GM12878 (cell line): ENCODE measurements at regions of chr7 and their contacts with region 1.

Region 1: DNA sequence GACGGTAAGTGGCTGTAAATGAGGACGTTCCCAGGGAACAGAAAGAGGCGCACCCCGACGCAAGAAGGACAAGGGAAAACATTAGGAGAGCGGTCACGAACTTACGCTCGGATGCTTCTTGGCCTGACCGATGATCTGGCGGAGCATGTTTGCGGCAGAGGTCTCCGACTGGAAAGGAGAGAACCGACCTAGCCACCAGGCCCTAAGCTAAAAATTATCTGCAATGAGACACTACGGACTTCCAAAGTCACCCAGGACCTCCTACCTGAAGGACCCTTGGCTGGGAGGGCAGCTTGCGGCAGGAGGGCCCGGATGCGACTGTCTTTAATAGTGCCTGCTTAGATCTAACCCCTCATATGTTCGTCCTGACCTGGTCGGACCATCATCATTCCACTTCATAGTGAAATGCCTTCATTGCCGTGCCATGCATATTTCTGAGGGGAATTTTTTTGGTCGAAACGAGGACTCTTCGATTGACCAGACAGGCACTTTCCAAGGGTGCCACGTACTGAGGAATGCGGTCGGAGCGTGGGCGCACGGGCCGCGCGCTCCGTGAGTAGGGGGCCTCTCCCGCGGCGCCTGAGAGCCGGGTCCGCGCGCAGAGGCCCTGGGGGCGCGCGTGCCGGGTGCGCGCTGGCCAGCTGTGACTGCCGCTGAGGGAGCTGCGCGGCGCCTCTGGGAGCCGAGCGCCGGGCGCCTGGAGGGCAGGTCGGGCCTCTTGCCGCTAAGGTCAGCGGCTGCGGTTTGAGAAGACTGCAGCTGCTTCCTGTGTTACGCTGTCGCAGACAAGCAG is 33.6 kb upstream of the PHF14 start:
- DNase-seq: peak; percentile 88
- ATAC-seq: peak; percentile 94
- H3K4me3 ChIP-seq: peak overlapping the region; percentile 95
- H3K27ac ChIP-seq: peak overlapping the region; percentile 98
- H3K4me1 ChIP-seq: peaks cover 3% of the 10 kb centered on the region; the same call in 1 of the 2 replicates
- H3K27me3 ChIP-seq: no peaks in the 10 kb centered on the region
- CTCF ChIP-seq: no peak
- EP300 ChIP-seq: peak in 1 of 2 experiments; percentile 45; a peak in 2 of 4 replicates
- POLR2A ChIP-seq: peak; percentile 98
- RAD21 ChIP-seq: no peak; the same call in 1 of the 2 replicates

Region 2: DNA sequence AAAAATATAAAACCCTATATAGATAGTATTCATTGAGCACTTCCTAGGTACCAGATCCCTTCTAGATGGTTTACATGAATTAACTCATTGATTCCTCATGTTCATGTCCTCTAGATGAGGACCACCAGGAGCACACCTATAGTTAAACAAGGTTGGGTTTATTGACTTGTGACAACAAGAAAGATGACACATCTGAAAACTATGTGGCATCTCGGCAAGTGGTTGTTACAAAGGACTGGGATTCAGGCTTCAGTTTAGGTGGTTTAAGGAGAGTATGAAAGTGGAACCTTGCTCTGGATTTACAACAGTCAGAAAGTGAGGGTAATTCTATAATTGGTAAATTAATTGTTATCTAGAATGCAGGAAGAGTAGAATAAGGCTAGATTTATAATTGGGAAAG is 65.4 kb before region 1 on chr7:
- CTCF ChIA-PET with region 1: no interaction called
- POLR2A ChIA-PET with region 1: no interaction called
- RAD21 ChIA-PET with region 1: no interaction called
- SMC1A ChIA-PET with region 1: no interaction called
- in situ Hi-C with region 1: no loop called
- intact Hi-C with region 1: no loop called
- DNase-seq: no peak
- ATAC-seq: no peak
- H3K4me3 ChIP-seq: no peak overlapping the region
- H3K27ac ChIP-seq: no peak overlapping the region
- H3K4me1 ChIP-seq: no peaks in the 10 kb centered on the region
- H3K27me3 ChIP-seq: no peaks in the 10 kb centered on the region
- CTCF ChIP-seq: no peak
- EP300 ChIP-seq: no peak
- POLR2A ChIP-seq: no peak
- RAD21 ChIP-seq: no peak

Region 3: DNA sequence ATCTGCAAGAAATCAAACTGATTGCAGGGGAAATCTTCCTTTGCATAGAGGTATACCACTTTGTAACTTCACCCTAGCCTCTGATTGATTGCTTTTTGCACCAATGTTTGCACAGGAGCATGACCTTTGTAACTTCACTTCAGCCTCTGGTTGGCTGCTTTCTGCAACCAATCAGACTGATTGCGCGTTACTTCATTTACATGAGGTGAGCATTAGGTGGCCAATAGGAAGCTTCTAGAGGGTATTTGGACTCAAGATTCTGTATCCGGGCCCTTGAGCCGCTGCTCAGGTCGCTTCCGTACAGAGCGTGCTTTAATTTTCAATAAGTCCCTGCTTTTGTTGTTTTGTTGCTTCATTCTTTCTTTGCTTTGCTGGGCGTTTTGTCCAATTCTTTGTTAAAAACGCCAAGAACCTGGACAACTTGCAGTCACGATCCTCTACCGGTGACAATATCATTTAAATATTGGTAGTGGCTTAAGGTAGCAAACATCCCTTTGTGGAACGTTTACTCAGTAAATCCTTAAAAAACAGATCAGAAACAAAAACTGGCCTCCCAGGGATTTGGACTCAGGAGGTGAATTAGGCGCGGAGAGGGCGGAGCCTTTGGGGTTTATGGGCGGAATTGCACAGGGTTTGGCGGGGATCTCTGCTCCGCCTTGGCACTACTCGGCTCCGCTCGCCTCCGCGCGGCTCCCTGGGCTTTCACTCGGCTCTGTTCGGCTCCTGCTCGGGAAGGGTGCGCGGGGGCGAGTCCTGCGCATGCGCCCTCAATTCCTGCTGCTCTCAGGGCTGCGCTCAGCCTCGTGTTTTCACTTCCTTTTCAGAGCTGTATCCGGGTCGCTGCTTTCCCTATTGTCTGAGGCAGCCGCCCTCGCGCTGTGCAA is 33.2 kb after region 1 on chr7 and contains the start of gene PHF14:
- CTCF ChIA-PET with region 1: interaction called, 3 read pairs
- POLR2A ChIA-PET with region 1: interaction called, 22 read pairs
- RAD21 ChIA-PET with region 1: interaction called, 15 read pairs
- SMC1A ChIA-PET with region 1: interaction called, 29 read pairs
- in situ Hi-C with region 1: no loop called
- intact Hi-C with region 1: loop called (anchors 1 kb)
- DNase-seq: peak; percentile 88
- ATAC-seq: peak; percentile 96
- H3K4me3 ChIP-seq: peak within 1 kb of the TSS; percentile 77
- H3K27ac ChIP-seq: peak within 1 kb of the TSS; percentile 77
- H3K4me1 ChIP-seq: peaks cover 3% of the 10 kb centered on the region; the same call in 1 of the 2 replicates
- H3K27me3 ChIP-seq: no peaks in the 10 kb centered on the region; a peak in 1 of 4 replicates
- CTCF ChIP-seq: no peak
- EP300 ChIP-seq: no peak
- POLR2A ChIP-seq: peak; percentile 83
- RAD21 ChIP-seq: no peak
- polyA plus RNA-seq, gene PHF14: 25.3 to 30.9 TPM

Region 4: DNA sequence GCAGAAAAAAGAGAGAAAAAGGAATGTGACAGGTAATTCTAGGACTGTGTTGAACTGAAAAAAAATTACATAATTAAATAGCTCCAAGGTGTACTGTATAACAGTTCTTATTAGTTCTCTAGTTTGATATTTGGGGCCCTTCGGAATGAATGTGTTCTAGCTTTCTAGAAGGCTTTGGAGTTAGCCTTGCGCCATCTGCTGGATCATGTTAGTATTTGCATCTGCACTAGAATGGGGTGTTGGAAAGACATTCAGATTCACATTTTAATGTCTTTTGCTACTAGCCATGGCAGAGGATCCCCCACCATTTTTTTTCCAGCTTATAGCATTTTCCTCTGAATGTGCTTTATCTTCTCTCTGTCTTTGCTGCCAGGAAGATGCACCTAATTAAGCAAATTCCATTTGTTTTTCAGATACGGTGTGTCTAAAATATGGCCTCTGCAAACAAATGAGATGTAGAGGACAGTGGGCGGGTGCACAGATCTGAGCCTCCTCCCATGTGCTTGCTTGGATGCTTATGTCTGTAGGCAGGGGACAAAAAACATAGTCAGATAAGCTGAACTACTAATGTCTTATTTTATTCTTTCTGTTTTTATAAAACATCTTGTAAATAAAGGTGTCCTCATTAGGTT is 272.1 kb after region 1 on chr7:
- CTCF ChIA-PET with region 1: interaction called, 4 read pairs
- POLR2A ChIA-PET with region 1: no interaction called
- RAD21 ChIA-PET with region 1: interaction called, 13 read pairs
- SMC1A ChIA-PET with region 1: interaction called, 17 read pairs
- in situ Hi-C with region 1: no loop called
- intact Hi-C with region 1: loop called (anchors 1 kb)
- DNase-seq: peak; percentile 12
- ATAC-seq: peak; percentile 92
- H3K4me3 ChIP-seq: no peak overlapping the region
- H3K27ac ChIP-seq: no peak overlapping the region
- H3K4me1 ChIP-seq: no peaks in the 10 kb centered on the region
- H3K27me3 ChIP-seq: peaks cover 0 to 2% of the 10 kb centered on the region in 2 experiments; a peak in 3 of 4 replicates
- CTCF ChIP-seq: peak; percentile 74 to 81 (median 78)
- EP300 ChIP-seq: no peak
- POLR2A ChIP-seq: no peak
- RAD21 ChIP-seq: peak; percentile 92

Region 5: DNA sequence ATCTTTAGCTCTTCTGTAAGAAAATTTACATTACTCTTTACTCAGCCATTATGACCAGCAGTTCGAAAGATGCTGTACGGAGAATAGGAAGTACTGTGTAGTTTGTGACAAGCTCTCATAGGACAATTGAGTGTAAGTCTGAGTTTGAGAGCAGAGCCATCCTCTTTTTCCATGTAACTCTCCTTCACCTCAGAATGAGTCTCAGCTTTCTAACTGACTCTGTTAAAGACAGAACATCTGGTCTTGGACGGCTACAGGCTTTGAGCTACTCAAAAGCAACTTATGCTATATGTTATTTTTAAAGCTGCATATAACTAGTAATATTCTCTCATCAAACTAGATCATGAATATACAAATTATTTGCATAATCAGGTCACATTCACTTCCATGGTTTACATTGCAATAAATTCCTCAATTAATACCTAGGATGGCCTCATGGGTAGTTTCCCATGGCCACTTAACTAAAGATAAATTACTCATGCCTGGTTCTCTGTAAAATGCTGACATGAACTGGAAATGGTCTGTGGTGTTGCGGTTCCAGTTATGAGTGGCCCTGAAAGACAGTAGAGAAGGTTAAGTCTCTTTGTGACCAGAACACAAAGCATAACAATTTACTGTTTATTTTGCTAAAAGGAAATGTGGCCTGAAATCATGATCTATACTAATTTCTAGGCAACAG is 392.2 kb after region 1 on chr7:
- CTCF ChIA-PET with region 1: no interaction called
- POLR2A ChIA-PET with region 1: no interaction called
- RAD21 ChIA-PET with region 1: no interaction called
- SMC1A ChIA-PET with region 1: no interaction called
- in situ Hi-C with region 1: loop called (anchors 25 kb)
- intact Hi-C with region 1: loop called (anchors 5 kb)
- DNase-seq: peak; percentile 61
- ATAC-seq: peak; percentile 97
- H3K4me3 ChIP-seq: no peak overlapping the region
- H3K27ac ChIP-seq: no peak overlapping the region
- H3K4me1 ChIP-seq: peaks cover 9% of the 10 kb centered on the region
- H3K27me3 ChIP-seq: no peaks in the 10 kb centered on the region
- CTCF ChIP-seq: no peak
- EP300 ChIP-seq: peak; percentile 20 to 93; a peak in 3 of 4 replicates
- POLR2A ChIP-seq: no peak
- RAD21 ChIP-seq: no peak